ENCODE measurements at regions of chr7 and their contacts with region 1.

Region 1: DNA sequence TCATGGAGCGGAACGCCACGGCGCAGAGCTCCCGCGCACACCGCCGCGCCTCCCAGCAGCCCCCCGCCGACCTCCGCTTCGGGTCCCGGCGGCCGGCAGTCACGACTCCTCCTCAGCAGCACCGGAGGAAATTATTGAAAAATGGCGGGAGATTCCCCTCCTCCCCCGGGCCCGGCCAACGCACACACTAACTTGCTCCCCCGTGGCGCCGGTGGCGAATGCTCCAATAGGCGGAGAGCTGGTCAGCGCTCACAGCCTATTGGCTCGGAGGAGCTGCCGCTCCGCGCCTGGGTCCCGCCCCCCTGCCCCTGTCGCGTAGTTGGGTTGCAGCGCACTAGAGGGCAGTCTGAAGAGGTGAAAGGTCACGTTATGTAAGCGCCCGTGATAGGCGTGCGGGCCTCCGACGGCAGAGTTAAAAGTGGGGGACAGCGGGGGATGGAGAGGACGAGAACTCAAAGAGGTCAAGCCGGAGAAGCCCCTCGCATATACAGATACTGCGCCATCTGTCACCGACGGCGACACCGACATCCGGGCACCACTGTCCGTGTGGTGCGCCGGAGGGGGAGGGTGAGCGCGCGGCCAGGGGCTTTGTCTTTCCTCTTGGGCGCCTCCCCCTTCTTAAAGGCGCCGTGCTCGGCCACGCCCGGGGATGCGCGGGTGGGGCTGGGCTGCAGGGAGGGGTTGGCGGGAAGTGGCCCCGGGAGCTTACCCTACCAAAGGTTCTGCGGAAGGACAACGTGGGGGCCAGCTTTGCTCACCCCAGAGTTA is at the start of gene BAZ1B:
- DNase-seq: peak; percentile 99
- H3K4me3 ChIP-seq: peak within 1 kb of the TSS; percentile 60 to 97 (median 92)
- H3K27ac ChIP-seq: peak within 1 kb of the TSS; percentile 86 to 99 (median 93)
- H3K4me1 ChIP-seq: peaks cover 0 to 50% (median 41%) of the 10 kb centered on the region in 4 donors
- H3K27me3 ChIP-seq: no peaks in the 10 kb centered on the region
- CTCF ChIP-seq: no peak
- EP300 ChIP-seq: peak in 1 of 4 donors; percentile 13
- POLR2A ChIP-seq: peak; percentile 27 to 44
- total RNA-seq, gene BAZ1B: 47.2 to 67.3 (median 53.5) TPM

Region 2: GRCh38 chr7:73557108-73557396 is 34.8 kb after region 1 on chr7:
- intact Hi-C with region 1: loop called (anchors 1 kb)
- DNase-seq: peak; percentile 96
- H3K4me3 ChIP-seq: peak overlapping the region; percentile 83 to 95 (median 90)
- H3K27ac ChIP-seq: peak overlapping the region; percentile 97 to 100 (median 100)
- H3K4me1 ChIP-seq: peaks cover 0 to 37% (median 24%) of the 10 kb centered on the region in 4 donors
- H3K27me3 ChIP-seq: no peaks in the 10 kb centered on the region
- CTCF ChIP-seq: no peak
- EP300 ChIP-seq: no peak
- POLR2A ChIP-seq: no peak

Region 3: DNA sequence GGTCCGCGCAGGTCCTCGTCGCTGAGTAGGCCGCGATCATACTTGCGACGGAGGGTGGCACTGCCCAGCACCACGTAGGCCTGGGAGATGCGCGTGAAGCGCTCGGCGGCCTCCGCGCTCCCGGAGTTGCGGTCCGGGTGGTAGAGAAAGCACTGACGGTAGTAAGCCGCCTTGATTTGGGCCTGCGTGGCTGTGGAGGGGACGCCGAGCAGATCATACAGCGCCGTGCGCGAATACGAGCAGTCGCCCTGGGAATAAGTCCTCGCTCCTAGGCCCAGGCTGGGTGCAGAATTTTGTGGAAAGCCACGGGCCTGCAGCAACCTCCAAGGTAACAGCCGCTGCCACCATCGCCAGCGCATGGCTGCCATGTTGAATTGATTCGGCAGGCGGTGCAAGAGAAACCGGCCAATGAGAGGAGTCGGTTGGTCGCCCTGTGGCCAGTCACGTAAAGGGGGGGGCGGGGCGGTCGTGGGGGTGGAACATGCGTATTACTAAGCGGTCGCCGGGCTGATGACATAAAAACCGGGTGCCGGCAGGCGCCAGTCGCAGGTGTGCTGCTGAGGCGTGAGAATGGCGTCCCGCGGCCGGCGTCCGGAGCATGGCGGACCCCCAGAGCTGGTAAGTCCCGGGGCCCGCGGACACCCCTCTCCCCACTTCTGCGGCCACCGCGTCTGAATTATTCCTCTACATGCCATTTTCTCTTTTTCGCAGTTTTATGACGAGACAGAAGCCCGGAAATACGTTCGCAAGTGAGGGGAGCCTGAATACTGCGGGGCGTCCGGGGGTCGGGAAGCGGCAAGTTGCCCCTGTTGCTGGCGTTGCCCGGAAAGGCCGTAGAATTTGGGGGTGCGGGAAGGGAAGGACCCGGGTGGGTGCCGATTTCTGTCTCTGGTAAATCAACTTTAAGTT is 161.0 kb after region 1 on chr7 and contains the starts of genes BUD23 and DNAJC30:
- intact Hi-C with region 1: loop called (anchors 5 kb)
- DNase-seq: peak; percentile 99
- H3K4me3 ChIP-seq: peak within 1 kb of the TSS; percentile 66 to 92 (median 81)
- H3K27ac ChIP-seq: peak within 1 kb of the TSS; percentile 81 to 89 (median 85)
- H3K4me1 ChIP-seq: peaks cover 0 to 42% (median 37%) of the 10 kb centered on the region in 4 donors
- H3K27me3 ChIP-seq: no peaks in the 10 kb centered on the region
- CTCF ChIP-seq: no peak
- EP300 ChIP-seq: no peak
- POLR2A ChIP-seq: peak; percentile 50 to 66
- total RNA-seq, gene BUD23: 36.8 to 42.4 (median 39.0) TPM
- total RNA-seq, gene DNAJC30: 3.3 to 7.6 (median 5.8) TPM